IMR-90 (cell line): ENCODE measurements at regions of chr7 and their contacts with region 1.

Region 1: DNA sequence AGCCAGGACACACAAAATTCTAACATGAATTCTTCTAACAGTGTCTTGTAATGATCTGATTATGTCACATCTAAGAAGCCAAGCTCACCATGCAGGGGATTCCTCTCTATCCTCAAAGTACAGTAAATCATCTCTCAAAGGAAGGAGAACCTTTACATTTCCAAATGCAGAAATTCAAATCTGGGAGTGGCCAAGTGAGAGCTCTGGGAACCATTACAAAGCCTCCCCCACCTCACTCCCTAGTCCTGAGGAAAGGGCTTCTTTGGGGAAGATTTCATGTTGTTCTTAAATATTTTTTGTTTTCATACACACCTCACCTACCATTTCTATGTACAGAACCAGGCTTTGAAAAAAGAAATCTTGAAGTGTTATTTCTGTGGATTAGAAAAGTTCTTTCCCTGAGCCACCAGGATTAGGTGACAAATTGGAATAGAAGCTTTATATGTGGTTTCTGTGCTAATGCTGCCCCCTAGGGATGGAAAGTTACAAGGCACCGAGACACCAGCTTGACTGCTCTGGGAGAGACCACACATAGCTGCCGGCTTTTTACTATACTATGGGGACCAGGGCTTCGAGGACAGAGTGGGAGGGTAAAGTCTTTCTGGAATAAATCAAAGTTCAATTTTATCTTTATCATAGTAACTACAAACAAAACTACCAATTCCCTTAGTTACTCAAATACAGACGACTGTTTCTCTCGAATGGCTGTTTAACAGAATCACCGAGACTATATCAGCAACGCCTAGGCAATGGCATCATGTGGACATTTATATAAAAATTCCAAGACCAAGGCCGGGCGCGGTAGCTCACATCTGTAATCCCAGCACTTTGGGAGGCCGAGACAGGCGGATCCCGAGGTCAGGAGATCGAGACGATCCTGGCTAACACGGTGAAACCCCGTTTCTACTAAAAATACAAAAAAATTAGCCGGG is 116.1 kb downstream of the RNF216 start:
- DNase-seq: peak; percentile 76
- ATAC-seq: peak; percentile 89
- H3K4me3 ChIP-seq: no peak overlapping the region
- H3K27ac ChIP-seq: no peak overlapping the region
- H3K4me1 ChIP-seq: peaks cover 10% of the 10 kb centered on the region
- H3K27me3 ChIP-seq: no peaks in the 10 kb centered on the region
- CTCF ChIP-seq: peak; percentile 89
- POLR2A ChIP-seq: no peak
- RAD21 ChIP-seq: peak; percentile 86

Region 2: DNA sequence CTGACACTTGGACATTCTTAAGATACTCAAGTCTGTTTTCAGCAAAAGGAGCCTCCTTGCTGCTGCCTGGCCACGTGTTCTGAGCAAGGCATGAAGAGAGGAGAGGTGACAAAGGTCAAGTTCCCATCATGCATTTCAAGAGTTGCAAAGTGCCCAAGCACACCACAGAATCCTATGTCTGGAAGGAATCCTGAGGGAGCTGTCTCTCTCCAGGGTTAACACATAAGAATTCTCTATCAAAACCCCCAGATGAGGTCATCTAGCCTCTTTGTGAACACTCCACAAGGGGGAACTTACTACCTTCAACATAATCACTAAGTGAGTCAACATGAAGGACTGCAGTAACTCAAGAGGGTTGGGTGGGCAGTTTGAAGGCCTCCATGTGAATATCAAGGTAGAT is 39.4 kb before region 1 on chr7:
- CTCF ChIA-PET with region 1: no interaction called
- POLR2A ChIA-PET with region 1: no interaction called
- dilution Hi-C with region 1: no loop called
- in situ Hi-C with region 1: no loop called
- intact Hi-C with region 1: no loop called
- DNase-seq: peak; percentile 94
- ATAC-seq: peak; percentile 89
- H3K4me3 ChIP-seq: no peak overlapping the region
- H3K27ac ChIP-seq: no peak overlapping the region
- H3K4me1 ChIP-seq: peaks cover 21% of the 10 kb centered on the region
- H3K27me3 ChIP-seq: no peaks in the 10 kb centered on the region
- CTCF ChIP-seq: peak; percentile 48
- POLR2A ChIP-seq: no peak
- RAD21 ChIP-seq: peak; percentile 45

Region 3: GRCh38 chr7:5636914-5637313 is 28.4 kb before region 1 on chr7:
- CTCF ChIA-PET with region 1: no interaction called
- POLR2A ChIA-PET with region 1: no interaction called
- dilution Hi-C with region 1: no loop called
- in situ Hi-C with region 1: no loop called
- intact Hi-C with region 1: loop called (anchors 5 kb)
- DNase-seq: peak; percentile 90
- ATAC-seq: peak; percentile 84
- H3K4me3 ChIP-seq: no peak overlapping the region
- H3K27ac ChIP-seq: peak overlapping the region; percentile 79; the same call in 1 of the 2 replicates
- H3K4me1 ChIP-seq: peaks cover 32% of the 10 kb centered on the region
- H3K27me3 ChIP-seq: no peaks in the 10 kb centered on the region
- CTCF ChIP-seq: no peak
- POLR2A ChIP-seq: no peak
- RAD21 ChIP-seq: no peak